CD4-positive, alpha-beta memory T cell (primary cell): ENCODE measurements at regions of chr3 and their contacts with region 1.

Region 1: GRCh38 chr3:133573054-133573628 is 345 bp upstream of the CDV3 start:
- DNase-seq: peak; percentile 100
- H3K4me3 ChIP-seq: peak overlapping the region; percentile 27 to 59
- H3K4me3 Mint-ChIP-seq: peak overlapping the region; percentile 79 to 92 (median 87)
- H3K27ac ChIP-seq: peak overlapping the region; percentile 90
- H3K27ac Mint-ChIP-seq: peak overlapping the region; percentile 97 to 99 (median 98)
- H3K4me1 ChIP-seq: peaks cover 46% of the 10 kb centered on the region
- H3K4me1 Mint-ChIP-seq: peaks cover 37 to 58% (median 47%) of the 10 kb centered on the region in 4 donors
- H3K27me3 ChIP-seq: no peaks in the 10 kb centered on the region
- H3K27me3 Mint-ChIP-seq: no peaks in the 10 kb centered on the region

Region 2: DNA sequence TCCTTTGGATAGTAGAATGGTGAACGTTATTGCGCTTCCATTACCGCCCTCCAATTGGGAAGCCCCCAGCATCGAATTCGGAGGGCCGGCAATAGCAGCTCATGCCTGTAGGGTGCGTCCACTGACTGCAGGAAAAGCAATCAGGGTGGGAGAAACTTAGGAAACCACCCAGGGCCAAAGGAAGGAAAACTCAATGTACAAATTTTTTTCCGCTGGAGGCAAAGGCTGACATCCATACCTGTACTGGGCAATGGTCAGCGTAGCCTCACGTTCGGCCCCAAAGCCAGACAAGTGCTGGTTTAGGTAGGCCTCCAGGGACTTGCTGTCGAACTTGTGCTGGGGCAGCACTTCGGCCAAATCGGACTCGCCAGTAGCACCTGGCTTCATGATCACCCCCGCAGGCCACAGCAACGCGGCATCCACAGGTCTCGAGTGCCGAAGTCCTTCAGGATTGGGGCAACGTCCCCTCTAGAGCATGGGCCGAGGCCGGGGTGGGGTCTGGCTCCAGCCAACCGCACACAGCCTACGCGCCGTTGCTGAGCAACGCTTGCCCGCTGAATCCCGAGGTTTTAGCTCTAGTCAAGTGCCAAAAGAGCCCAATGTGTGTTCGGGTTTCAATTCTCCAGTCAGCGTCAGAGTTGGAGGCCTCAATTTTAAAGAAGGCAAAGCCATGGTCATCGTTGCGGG is 913.6 kb before region 1 on chr3 and contains the start of gene ACAD11:
- CTCF ChIA-PET with region 1: no interaction called
- POLR2A ChIA-PET with region 1: interaction called, 7 read pairs
- intact Hi-C with region 1: loop called (anchors 1 kb)
- DNase-seq: peak; percentile 11 to 48 (median 13)
- H3K4me3 ChIP-seq: peak within 1 kb of the TSS; percentile 78 to 99
- H3K4me3 Mint-ChIP-seq: peak within 1 kb of the TSS; percentile 96 to 99 (median 98)
- H3K27ac ChIP-seq: peak within 1 kb of the TSS; percentile 83
- H3K27ac Mint-ChIP-seq: peak within 1 kb of the TSS; percentile 95 to 98 (median 97)
- H3K4me1 ChIP-seq: peaks cover 53% of the 10 kb centered on the region
- H3K4me1 Mint-ChIP-seq: peaks cover 37 to 71% (median 48%) of the 10 kb centered on the region in 4 donors
- H3K27me3 ChIP-seq: no peaks in the 10 kb centered on the region
- H3K27me3 Mint-ChIP-seq: no peaks in the 10 kb centered on the region
- total RNA-seq, gene ACAD11: 21.6 to 26.9 TPM

Region 3: DNA sequence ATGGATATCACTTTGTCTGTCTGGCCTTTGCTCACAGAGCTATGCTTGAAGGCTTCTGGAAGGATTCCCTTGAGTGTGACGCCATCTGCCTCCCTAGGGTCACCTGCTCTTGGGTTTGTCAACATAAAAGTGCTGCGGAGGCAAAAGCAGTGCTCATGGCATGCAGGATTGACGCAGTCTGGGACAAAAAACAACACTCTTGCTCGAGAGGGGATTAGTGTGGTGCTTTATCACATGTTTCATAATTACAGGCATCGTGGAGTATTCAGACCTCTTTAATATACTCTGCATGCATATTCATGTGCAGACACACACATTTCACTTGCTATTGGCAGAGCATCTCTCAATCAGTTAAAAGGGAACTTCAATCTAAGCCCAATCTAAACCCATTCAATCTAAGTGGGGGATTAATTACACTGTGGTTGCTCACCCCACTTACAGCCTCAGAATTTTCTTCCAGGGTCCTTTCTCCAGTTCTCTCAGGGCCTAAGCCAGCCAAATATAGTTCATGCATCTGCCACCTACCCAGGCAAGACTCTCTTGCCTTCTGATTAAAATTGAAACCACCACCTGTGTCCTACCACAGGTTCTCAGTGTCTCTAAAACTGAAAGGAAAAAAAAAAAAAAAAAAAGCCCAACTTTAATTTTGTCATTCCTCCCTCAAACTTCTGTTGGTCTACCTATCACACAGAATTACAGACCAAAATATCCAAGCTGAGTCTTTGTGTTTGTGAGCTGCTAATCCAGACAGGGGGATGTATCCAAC is 97.7 kb before region 1 on chr3:
- CTCF ChIA-PET with region 1: interaction called, 4 read pairs
- POLR2A ChIA-PET with region 1: interaction called, 10 read pairs
- intact Hi-C with region 1: no loop called
- DNase-seq: no peak
- H3K4me3 ChIP-seq: no peak overlapping the region
- H3K4me3 Mint-ChIP-seq: peak overlapping the region in 5 of 8 donors; percentile 26 to 82 (median 53)
- H3K27ac ChIP-seq: no peak overlapping the region
- H3K27ac Mint-ChIP-seq: peak overlapping the region; percentile 22 to 90 (median 76)
- H3K4me1 ChIP-seq: peaks cover 22% of the 10 kb centered on the region
- H3K4me1 Mint-ChIP-seq: peaks cover 26 to 30% (median 27%) of the 10 kb centered on the region in 4 donors
- H3K27me3 ChIP-seq: no peaks in the 10 kb centered on the region
- H3K27me3 Mint-ChIP-seq: no peaks in the 10 kb centered on the region

Region 4: GRCh38 chr3:133531981-133532380 is 41.2 kb before region 1 on chr3:
- CTCF ChIA-PET with region 1: no interaction called
- POLR2A ChIA-PET with region 1: no interaction called
- intact Hi-C with region 1: no loop called
- DNase-seq: no peak
- H3K4me3 ChIP-seq: no peak overlapping the region
- H3K4me3 Mint-ChIP-seq: no peak overlapping the region
- H3K27ac ChIP-seq: no peak overlapping the region
- H3K27ac Mint-ChIP-seq: no peak overlapping the region
- H3K4me1 ChIP-seq: no peaks in the 10 kb centered on the region
- H3K4me1 Mint-ChIP-seq: no peaks in the 10 kb centered on the region
- H3K27me3 ChIP-seq: no peaks in the 10 kb centered on the region
- H3K27me3 Mint-ChIP-seq: peaks cover 0 to 3% of the 10 kb centered on the region in 2 donors

Region 5: GRCh38 chr3:133661454-133662277 is 88.5 kb after region 1 on chr3 and contains the start of gene TOPBP1:
- CTCF ChIA-PET with region 1: interaction called, 5 read pairs
- POLR2A ChIA-PET with region 1: interaction called, 16 read pairs
- intact Hi-C with region 1: loop called (anchors 1 kb)
- DNase-seq: peak; percentile 81 to 90 (median 85)
- H3K4me3 ChIP-seq: peak within 1 kb of the TSS; percentile 78 to 99
- H3K4me3 Mint-ChIP-seq: peak within 1 kb of the TSS; percentile 98 to 99 (median 98)
- H3K27ac ChIP-seq: peak within 1 kb of the TSS; percentile 81
- H3K27ac Mint-ChIP-seq: peak within 1 kb of the TSS; percentile 98 to 99 (median 99)
- H3K4me1 ChIP-seq: peaks cover 32% of the 10 kb centered on the region
- H3K4me1 Mint-ChIP-seq: peaks cover 29 to 52% (median 40%) of the 10 kb centered on the region in 4 donors
- H3K27me3 ChIP-seq: no peaks in the 10 kb centered on the region
- H3K27me3 Mint-ChIP-seq: no peaks in the 10 kb centered on the region
- total RNA-seq, gene TOPBP1: 42.0 to 43.2 TPM